Gastrocnemius medialis (tissue), 4 donors: ENCODE measurements at regions of chr13 and their contacts with region 1.

Region 1: DNA sequence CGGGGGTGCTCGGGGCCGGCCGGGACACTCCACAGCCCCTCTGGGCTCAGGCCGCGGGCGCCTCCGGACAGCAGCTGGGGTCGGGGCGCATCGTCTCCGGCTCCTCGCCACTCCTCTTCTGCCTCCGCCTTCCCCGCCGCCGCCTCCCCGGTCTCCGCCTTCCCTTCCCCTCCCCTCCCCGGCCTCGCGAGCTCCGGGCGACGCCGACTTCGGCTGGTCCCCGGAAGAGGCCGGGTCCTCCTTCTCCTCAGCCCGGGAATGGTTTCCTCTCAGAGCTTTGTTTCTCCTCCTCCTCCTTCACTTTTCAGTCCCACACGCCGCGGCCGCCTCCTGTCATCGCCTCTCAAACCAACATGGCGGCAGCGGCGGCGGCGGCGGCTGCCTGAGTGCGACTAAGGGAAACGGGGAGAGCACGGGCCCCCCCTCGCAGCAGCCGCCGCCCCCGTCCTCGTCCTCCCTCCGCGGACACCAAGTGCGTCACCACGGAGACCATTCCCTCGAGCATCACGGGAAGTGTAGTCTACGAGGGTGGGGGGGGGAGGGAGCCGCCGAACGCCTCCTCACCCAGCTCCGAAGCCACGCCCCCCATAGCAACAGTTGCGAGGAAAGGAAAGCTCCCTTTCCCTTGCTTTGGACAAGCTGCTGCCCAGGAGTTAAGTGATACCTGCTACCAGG is at the start of gene UBL3:
- DNase-seq: peak; percentile 96 to 97
- ATAC-seq: peak; percentile 91 to 92
- H3K4me3 ChIP-seq: peak within 1 kb of the TSS; percentile 76 to 97 (median 95)
- H3K27ac ChIP-seq: peak within 1 kb of the TSS; percentile 98 to 100 (median 100)
- H3K4me1 ChIP-seq: peaks cover 28 to 30% of the 10 kb centered on the region in 2 donors
- H3K27me3 ChIP-seq: no peaks in the 10 kb centered on the region
- CTCF ChIP-seq: no peak
- POLR2A ChIP-seq: peak; percentile 86 to 94
- total RNA-seq, gene UBL3: 27.8 to 32.4 (median 29.4) TPM

Region 2: DNA sequence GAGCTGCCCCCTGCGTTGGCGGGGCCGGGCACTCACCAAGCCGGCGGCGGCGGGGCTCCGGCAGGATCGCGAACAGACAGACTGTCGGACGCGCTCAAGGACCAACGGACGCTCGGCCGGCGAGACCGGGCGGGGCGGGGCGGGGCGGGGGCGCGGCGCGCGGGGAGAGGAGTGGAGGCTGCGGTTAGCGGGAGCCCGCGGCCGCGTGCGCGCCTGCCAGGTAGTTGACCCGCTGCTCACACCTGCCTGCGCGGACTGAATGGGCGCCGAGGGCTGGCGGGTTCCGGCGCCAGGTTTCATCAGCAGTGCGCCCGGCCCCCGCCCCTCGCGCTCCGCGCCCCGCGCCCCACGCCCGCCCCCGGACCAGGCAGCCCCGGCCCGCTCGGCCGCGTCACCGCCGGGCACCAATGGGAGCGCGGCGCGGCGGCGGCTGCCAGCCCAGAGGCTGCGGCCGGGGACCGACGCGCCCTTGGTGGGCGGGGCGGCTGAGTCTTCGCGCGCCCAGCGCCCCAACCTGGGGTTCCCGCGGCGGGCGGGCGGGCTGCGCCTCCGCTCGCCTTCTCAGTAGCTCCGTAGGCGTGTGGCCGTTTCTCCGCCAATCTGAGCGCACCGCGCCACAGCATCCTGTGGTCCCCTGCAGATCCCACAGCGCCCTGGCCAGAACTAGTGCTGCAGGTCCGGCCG is 254.8 kb before region 1 on chr13 and contains the start of gene SLC7A1:
- in situ Hi-C with region 1: no loop called
- intact Hi-C with region 1: loop called (anchors 10 kb)
- DNase-seq: peak in 1 of 2 donors; percentile 24
- ATAC-seq: peak; percentile 72 to 81
- H3K4me3 ChIP-seq: peak within 1 kb of the TSS; percentile 54 to 74 (median 60)
- H3K27ac ChIP-seq: peak within 1 kb of the TSS; percentile 52 to 67 (median 66)
- H3K4me1 ChIP-seq: peaks cover 0 to 4% of the 10 kb centered on the region in 2 donors
- H3K27me3 ChIP-seq: peaks cover 0 to 17% (median 8%) of the 10 kb centered on the region in 3 donors
- CTCF ChIP-seq: no peak
- POLR2A ChIP-seq: peak; percentile 14 to 38
- total RNA-seq, gene SLC7A1: 1.6 to 4.6 (median 3.7) TPM

Region 3: GRCh38 chr13:29817604-29818378 is 32.6 kb before region 1 on chr13:
- in situ Hi-C with region 1: no loop called
- intact Hi-C with region 1: loop called (anchors 5 kb)
- DNase-seq: no peak
- ATAC-seq: peak; percentile 69 to 82
- H3K4me3 ChIP-seq: peak overlapping the region in 1 of 4 donors; percentile 16
- H3K27ac ChIP-seq: peak overlapping the region in 3 of 4 donors; percentile 1 to 46 (median 4)
- H3K4me1 ChIP-seq: peaks cover 37 to 63% of the 10 kb centered on the region in 2 donors
- H3K27me3 ChIP-seq: no peaks in the 10 kb centered on the region
- CTCF ChIP-seq: no peak
- POLR2A ChIP-seq: no peak

Region 4: GRCh38 chr13:30114571-30115256 is 264.4 kb after region 1 on chr13:
- in situ Hi-C with region 1: loop called in 1 of 4 experiments (anchors 5 kb)
- intact Hi-C with region 1: loop called (anchors 2 kb)
- DNase-seq: peak; percentile 71 to 79
- ATAC-seq: peak; percentile 80 to 83
- H3K4me3 ChIP-seq: peak overlapping the region; percentile 38 to 68 (median 48)
- H3K27ac ChIP-seq: peak overlapping the region; percentile 48 to 69 (median 60)
- H3K4me1 ChIP-seq: peaks cover 6 to 13% of the 10 kb centered on the region in 2 donors
- H3K27me3 ChIP-seq: no peaks in the 10 kb centered on the region
- CTCF ChIP-seq: peak; percentile 85 to 92 (median 90)
- POLR2A ChIP-seq: no peak

Region 5: DNA sequence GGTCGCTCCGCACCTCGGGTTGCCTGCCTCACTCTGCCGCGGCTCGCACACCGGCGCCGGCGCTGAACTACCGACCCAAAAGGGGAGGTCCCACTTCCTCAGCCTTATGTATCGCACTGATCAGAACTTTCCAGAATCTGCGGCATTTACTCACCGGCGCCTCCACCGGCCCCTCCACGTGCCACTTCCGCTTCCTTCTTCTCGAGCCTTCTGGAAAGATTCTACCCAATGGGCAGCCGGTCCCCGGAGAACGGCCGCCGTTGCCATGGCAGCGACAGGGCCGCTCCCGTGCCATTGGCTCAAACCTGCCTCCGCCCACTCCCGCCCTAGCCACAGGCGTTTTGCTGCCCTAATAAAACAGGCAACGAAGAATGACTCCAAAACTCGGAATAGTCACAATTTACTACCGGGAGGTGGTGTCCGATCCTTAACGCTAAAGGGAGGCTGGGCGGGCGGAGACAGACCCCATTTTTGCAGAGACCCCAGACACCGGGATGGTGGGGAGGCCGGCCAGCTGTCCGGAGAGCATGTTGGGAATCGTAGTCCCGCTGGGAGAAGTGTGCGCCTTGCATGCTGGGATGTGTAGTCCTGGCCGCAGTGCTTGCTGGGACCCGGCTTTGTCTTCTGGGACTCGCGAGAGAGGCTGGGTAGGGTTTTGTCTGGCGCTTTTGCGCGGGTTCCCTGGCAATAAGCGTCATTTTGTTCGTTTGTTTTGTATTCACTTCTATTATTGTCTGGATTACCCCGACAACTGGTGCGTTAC is 1311.6 kb after region 1 on chr13 and contains the start of gene HSPH1:
- in situ Hi-C with region 1: no loop called
- intact Hi-C with region 1: loop called (anchors 5 kb)
- DNase-seq: peak; percentile 97 to 98
- ATAC-seq: peak; percentile 95 to 96
- H3K4me3 ChIP-seq: peak within 1 kb of the TSS; percentile 82 to 95 (median 93)
- H3K27ac ChIP-seq: peak within 1 kb of the TSS; percentile 84 to 98 (median 96)
- H3K4me1 ChIP-seq: peaks cover 31 to 42% of the 10 kb centered on the region in 2 donors
- H3K27me3 ChIP-seq: no peaks in the 10 kb centered on the region
- CTCF ChIP-seq: peak in 1 of 5 experiments; percentile 28
- POLR2A ChIP-seq: peak; percentile 74 to 93
- total RNA-seq, gene HSPH1: 23.0 to 57.7 (median 30.6) TPM